Activated CD4-positive, alpha-beta memory T cell treated with anti-CD3 and anti-CD28 coated beads for 36 hours (primary cell): ENCODE measurements at regions of chr1 and their contacts with region 1.

Region 1: DNA sequence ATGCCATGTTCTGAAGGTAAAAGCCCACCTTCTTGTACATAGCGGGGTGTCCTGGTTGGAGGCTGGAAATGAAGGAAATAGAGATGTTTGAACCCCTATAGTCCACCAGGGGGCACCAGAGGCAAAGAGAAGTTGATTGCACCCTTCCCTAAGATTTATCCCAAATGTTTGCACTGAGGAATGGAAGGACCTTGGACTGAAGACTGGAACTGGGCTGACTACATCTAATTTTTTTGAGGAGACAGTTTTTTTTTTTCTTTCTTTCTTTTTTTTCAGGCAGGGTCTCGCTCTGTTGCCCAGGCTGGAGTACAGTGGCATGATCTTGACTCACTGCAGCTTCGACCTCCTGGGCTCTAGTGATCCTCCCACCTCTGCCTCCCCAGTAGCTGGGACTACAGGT is 55.3 kb upstream of the EIF4G3 start:
- DNase-seq: no peak
- H3K4me3 Mint-ChIP-seq: no peak overlapping the region
- H3K27ac Mint-ChIP-seq: no peak overlapping the region
- H3K4me1 Mint-ChIP-seq: no peaks in the 10 kb centered on the region
- H3K27me3 Mint-ChIP-seq: no peaks in the 10 kb centered on the region

Region 2: GRCh38 chr1:21216835-21217811 is 14.9 kb before region 1 on chr1:
- CTCF ChIA-PET with region 1: interaction called, 40 read pairs
- POLR2A ChIA-PET with region 1: interaction called, 3 read pairs
- intact Hi-C with region 1: no loop called
- DNase-seq: peak; percentile 81
- H3K4me3 Mint-ChIP-seq: no peak overlapping the region
- H3K27ac Mint-ChIP-seq: peak overlapping the region; percentile 46
- H3K4me1 Mint-ChIP-seq: peaks cover 3% of the 10 kb centered on the region
- H3K27me3 Mint-ChIP-seq: no peaks in the 10 kb centered on the region

Region 3: DNA sequence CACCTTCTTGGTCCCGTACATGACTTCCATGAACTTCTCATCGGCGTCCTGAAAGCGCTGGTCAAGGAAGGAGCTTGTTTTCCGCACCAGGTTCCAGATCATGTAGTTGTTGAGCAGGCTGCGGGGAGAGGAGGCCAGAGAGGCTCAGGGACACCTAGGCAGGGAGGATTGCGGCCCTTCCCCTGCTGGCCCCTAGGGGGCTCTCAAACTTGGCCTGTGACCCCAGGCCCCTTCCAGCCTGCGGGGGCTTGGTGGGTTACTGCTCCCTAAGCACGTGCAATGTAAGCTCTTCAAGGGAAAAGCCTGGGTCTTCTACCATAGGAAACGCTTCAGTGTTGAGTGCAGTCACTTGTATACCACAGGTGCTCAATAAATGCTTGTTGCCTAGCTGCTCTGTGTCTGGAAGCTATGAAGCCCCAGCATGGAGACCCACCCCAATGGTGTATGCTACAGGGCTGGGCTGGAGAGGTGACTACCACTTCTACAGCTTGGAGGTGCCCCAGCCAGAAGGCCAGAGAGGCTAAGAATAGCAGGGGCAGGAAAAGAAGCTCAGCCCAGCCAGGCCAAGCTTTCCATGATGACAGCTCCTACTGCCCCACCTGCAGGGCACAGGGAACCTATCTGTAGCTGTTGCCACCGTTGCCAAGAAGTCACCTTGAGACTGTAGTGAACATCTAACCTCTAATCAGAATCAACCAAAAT is 13.1 kb after region 1 on chr1:
- CTCF ChIA-PET with region 1: interaction called, 13 read pairs
- POLR2A ChIA-PET with region 1: no interaction called
- intact Hi-C with region 1: no loop called
- DNase-seq: peak; percentile 27
- H3K4me3 Mint-ChIP-seq: no peak overlapping the region
- H3K27ac Mint-ChIP-seq: no peak overlapping the region
- H3K4me1 Mint-ChIP-seq: no peaks in the 10 kb centered on the region
- H3K27me3 Mint-ChIP-seq: no peaks in the 10 kb centered on the region